CD8-positive, alpha-beta T cell (primary cell): ENCODE measurements at regions of chr9 and their contacts with region 1.

Region 1: GRCh38 chr9:128339771-128340690 is at the start of gene SLC27A4:
- DNase-seq: peak; percentile 52 to 92 (median 76)
- ATAC-seq: peak; percentile 92
- H3K4me3 ChIP-seq: peak within 1 kb of the TSS; percentile 73 to 83
- H3K4me3 Mint-ChIP-seq: peak within 1 kb of the TSS; percentile 96
- H3K27ac ChIP-seq: peak within 1 kb of the TSS; percentile 40 to 53
- H3K27ac Mint-ChIP-seq: peak within 1 kb of the TSS; percentile 85
- H3K4me1 ChIP-seq: peaks cover 14% of the 10 kb centered on the region
- H3K4me1 Mint-ChIP-seq: peaks cover 8% of the 10 kb centered on the region
- H3K27me3 ChIP-seq: no peaks in the 10 kb centered on the region
- H3K27me3 Mint-ChIP-seq: no peaks in the 10 kb centered on the region
- CTCF ChIP-seq: no peak
- total RNA-seq, gene SLC27A4: 2.2 to 2.4 TPM

Region 2: GRCh38 chr9:128211186-128211980 is 128.6 kb before region 1 on chr9:
- CTCF ChIA-PET with region 1: no interaction called
- POLR2A ChIA-PET with region 1: no interaction called
- intact Hi-C with region 1: no loop called
- DNase-seq: peak in 1 of 9 experiments; percentile 5
- ATAC-seq: no peak
- H3K4me3 ChIP-seq: no peak overlapping the region
- H3K4me3 Mint-ChIP-seq: no peak overlapping the region
- H3K27ac ChIP-seq: no peak overlapping the region
- H3K27ac Mint-ChIP-seq: no peak overlapping the region
- H3K4me1 ChIP-seq: no peaks in the 10 kb centered on the region
- H3K4me1 Mint-ChIP-seq: no peaks in the 10 kb centered on the region
- H3K27me3 ChIP-seq: no peaks in the 10 kb centered on the region
- H3K27me3 Mint-ChIP-seq: peaks cover 4% of the 10 kb centered on the region
- CTCF ChIP-seq: no peak

Region 3: GRCh38 chr9:128296337-128297220 is 43.5 kb before region 1 on chr9:
- CTCF ChIA-PET with region 1: interaction called, 19 read pairs
- POLR2A ChIA-PET with region 1: no interaction called
- intact Hi-C with region 1: loop called in 1 of 2 experiments (anchors 1 kb)
- DNase-seq: no peak
- ATAC-seq: no peak
- H3K4me3 ChIP-seq: no peak overlapping the region
- H3K4me3 Mint-ChIP-seq: no peak overlapping the region
- H3K27ac ChIP-seq: no peak overlapping the region
- H3K27ac Mint-ChIP-seq: no peak overlapping the region
- H3K4me1 ChIP-seq: no peaks in the 10 kb centered on the region
- H3K4me1 Mint-ChIP-seq: peaks cover 3% of the 10 kb centered on the region
- H3K27me3 ChIP-seq: no peaks in the 10 kb centered on the region
- H3K27me3 Mint-ChIP-seq: no peaks in the 10 kb centered on the region
- CTCF ChIP-seq: no peak

Region 4: DNA sequence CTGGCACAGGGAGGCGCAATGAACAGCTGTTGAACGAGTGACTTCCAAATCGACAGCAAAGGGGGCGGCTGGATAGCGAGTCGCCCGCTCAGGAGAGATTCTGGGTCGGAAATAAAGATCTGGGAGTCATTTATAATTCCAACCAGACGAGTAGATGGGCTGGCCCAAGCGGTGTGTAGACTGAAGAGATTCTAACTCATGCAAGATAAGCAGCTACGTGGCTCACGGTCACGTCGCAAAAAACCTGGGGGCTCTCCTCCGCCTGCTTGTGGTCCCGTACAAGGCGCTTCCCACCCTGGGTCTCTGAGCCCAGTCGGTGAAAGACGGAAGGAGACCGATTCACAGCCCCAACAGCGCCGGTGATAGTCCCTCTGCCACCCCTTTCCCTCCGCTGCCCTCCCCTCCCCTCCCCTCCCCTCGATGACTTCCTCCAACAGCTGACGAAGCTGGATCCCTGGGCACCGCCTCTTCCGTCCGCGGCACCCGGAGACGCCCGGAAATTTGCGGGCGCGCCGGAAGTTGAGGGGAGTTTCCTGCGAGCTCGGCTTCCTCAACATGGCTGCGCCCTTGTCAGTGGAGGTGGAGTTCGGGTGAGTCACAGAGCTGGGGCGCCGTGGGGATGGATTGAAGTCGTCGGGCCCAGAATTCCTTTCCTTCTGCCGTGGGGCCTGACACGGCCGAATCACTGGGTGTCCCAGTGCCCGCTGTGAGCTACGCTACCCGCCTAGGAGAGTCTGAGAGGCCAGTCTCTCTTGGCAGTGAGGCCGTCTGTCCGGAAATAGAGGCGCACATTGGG is 31.0 kb after region 1 on chr9 and contains the start of gene URM1:
- CTCF ChIA-PET with region 1: interaction called, 3 read pairs
- POLR2A ChIA-PET with region 1: no interaction called
- intact Hi-C with region 1: loop called (anchors 1 kb)
- DNase-seq: peak; percentile 91 to 98 (median 96)
- ATAC-seq: peak; percentile 90
- H3K4me3 ChIP-seq: peak within 1 kb of the TSS; percentile 84 to 95
- H3K4me3 Mint-ChIP-seq: peak within 1 kb of the TSS; percentile 97
- H3K27ac ChIP-seq: peak within 1 kb of the TSS; percentile 76 to 96
- H3K27ac Mint-ChIP-seq: peak within 1 kb of the TSS; percentile 98
- H3K4me1 ChIP-seq: peaks cover 16% of the 10 kb centered on the region
- H3K4me1 Mint-ChIP-seq: peaks cover 43% of the 10 kb centered on the region
- H3K27me3 ChIP-seq: no peaks in the 10 kb centered on the region
- H3K27me3 Mint-ChIP-seq: no peaks in the 10 kb centered on the region
- CTCF ChIP-seq: no peak
- total RNA-seq, gene URM1: 30.4 to 31.5 TPM

Region 5: DNA sequence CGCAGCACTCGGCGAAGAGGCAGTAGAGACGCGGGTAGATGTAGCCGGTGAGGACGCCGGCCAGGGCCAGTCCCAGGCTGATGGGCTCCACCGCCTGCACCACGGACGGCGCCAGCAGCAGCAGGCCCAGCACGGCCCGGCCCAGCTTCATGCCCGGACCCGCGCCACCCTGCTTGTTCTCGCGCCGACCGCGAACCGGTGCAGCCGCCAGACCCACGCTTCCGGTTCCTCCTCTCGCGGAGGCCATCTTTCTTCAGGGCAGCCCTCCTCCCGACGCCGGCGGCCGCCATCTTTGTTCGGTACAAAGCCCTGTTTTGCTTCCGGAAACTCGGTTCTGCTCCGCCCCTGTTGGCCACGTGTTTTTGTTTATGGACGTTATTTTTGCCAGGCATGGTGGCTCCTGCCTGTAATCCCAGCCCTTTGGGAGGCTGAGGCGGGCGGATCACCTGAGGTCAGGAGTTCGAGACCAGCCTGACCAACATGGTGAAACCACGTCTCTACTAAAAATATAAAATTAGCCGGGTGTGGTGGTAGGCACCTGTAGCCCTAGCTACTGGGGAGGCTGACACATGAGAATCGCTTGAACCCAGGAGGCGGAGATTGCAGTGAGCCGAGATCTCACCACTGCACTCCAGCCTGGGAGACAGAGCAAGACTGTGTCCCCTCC is 1484.0 kb after region 1 on chr9 and contains the start of gene TOR1A:
- CTCF ChIA-PET with region 1: no interaction called
- POLR2A ChIA-PET with region 1: no interaction called
- intact Hi-C with region 1: no loop called
- DNase-seq: peak; percentile 83 to 96 (median 91)
- ATAC-seq: peak; percentile 87
- H3K4me3 ChIP-seq: peak within 1 kb of the TSS; percentile 64 to 87
- H3K4me3 Mint-ChIP-seq: peak within 1 kb of the TSS; percentile 89
- H3K27ac ChIP-seq: peak within 1 kb of the TSS; percentile 44 to 53
- H3K27ac Mint-ChIP-seq: peak within 1 kb of the TSS; percentile 87
- H3K4me1 ChIP-seq: peaks cover 9% of the 10 kb centered on the region
- H3K4me1 Mint-ChIP-seq: peaks cover 16% of the 10 kb centered on the region
- H3K27me3 ChIP-seq: no peaks in the 10 kb centered on the region
- H3K27me3 Mint-ChIP-seq: no peaks in the 10 kb centered on the region
- CTCF ChIP-seq: no peak
- total RNA-seq, gene TOR1A: 18.9 to 19.6 TPM